BJ (cell line): ENCODE measurements at regions of chr2 and their contacts with region 1.

Region 1: GRCh38 chr2:73176881-73177644 is 25.3 kb upstream of the NOTO start:
- DNase-seq: no peak
- H3K4me3 ChIP-seq: peak overlapping the region; percentile 78
- H3K27me3 ChIP-seq: peaks cover 12% of the 10 kb centered on the region
- CTCF ChIP-seq: peak; percentile 99

Region 2: GRCh38 chr2:72895759-72896281 is 281.2 kb before region 1 on chr2:
- CTCF ChIA-PET with region 1: interaction called, 144 read pairs
- POLR2A ChIA-PET with region 1: no interaction called
- DNase-seq: no peak
- H3K4me3 ChIP-seq: no peak overlapping the region
- H3K27me3 ChIP-seq: peaks cover 18% of the 10 kb centered on the region
- CTCF ChIP-seq: no peak; the same call in 1 of the 2 replicates

Region 3: GRCh38 chr2:72973566-72974435 is 203.3 kb before region 1 on chr2:
- CTCF ChIA-PET with region 1: interaction called, 19 read pairs
- POLR2A ChIA-PET with region 1: no interaction called
- DNase-seq: no peak
- H3K4me3 ChIP-seq: no peak overlapping the region
- H3K27me3 ChIP-seq: no peaks in the 10 kb centered on the region
- CTCF ChIP-seq: peak; percentile 93

Region 4: GRCh38 chr2:72999729-73000725 is 177.0 kb before region 1 on chr2:
- CTCF ChIA-PET with region 1: interaction called, 17 read pairs
- POLR2A ChIA-PET with region 1: no interaction called
- DNase-seq: no peak
- H3K4me3 ChIP-seq: no peak overlapping the region
- H3K27me3 ChIP-seq: no peaks in the 10 kb centered on the region
- CTCF ChIP-seq: no peak

Region 5: GRCh38 chr2:73035899-73036711 is 141.0 kb before region 1 on chr2:
- CTCF ChIA-PET with region 1: no interaction called
- POLR2A ChIA-PET with region 1: no interaction called
- DNase-seq: no peak
- H3K4me3 ChIP-seq: no peak overlapping the region
- H3K27me3 ChIP-seq: no peaks in the 10 kb centered on the region
- CTCF ChIP-seq: 0 out of 2 replicates have a peak, but pooled peaks have one; percentile 7

Region 6: DNA sequence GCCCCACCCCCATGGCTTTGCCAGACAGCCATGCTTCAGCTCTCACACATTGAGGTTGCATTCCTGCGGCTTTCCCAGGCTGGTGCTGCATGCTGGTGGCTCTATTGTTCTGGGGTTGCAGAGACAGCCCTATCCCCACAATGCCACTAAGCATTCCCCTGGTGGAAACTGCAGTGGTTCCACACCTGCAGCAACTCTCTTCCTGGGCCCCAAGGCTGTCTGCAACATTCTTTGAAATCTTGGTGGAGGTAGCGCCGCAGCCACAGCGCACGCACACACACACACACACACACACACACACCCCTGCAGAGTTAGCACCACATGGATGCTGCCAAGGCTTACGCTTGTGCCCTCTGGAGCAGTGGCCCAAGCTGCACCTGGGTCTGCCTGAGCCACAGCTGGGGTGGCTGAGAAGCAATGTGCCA is 126.9 kb before region 1 on chr2:
- CTCF ChIA-PET with region 1: no interaction called
- POLR2A ChIA-PET with region 1: no interaction called
- DNase-seq: no peak
- H3K4me3 ChIP-seq: no peak overlapping the region
- H3K27me3 ChIP-seq: no peaks in the 10 kb centered on the region
- CTCF ChIP-seq: no peak

Region 7: DNA sequence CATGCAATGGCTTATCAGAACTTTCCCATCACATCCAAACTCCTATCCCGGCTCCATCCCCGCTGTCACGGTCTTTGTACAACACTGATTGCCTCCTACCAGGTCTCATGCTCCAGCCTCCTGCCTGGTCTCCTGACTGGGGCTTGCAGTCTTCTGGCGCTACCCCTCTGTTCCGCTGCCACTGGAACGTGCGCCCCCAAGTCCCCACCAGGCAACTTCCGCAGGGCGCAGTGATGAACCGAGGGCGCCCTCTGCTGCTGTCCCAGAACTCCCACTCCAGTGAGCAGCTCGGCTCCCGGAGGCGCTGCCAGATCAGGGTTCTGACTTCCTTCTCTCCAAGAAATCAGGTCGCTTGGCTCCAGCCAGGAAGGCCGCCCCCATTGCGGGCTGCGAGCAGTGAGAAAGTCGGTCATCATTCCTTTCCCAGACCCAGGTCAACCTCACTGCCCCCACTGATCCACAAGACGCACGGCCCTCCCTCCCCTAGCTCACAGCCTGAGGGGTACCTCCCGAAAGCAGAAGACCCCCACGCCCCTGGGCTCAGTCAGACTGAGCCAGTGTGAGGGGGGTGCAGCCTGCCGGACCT is 20.4 kb before region 1 on chr2:
- CTCF ChIA-PET with region 1: interaction called, 20 read pairs
- POLR2A ChIA-PET with region 1: no interaction called
- DNase-seq: no peak
- H3K4me3 ChIP-seq: no peak overlapping the region
- H3K27me3 ChIP-seq: peaks cover 6% of the 10 kb centered on the region
- CTCF ChIP-seq: peak; percentile 94

Region 8: DNA sequence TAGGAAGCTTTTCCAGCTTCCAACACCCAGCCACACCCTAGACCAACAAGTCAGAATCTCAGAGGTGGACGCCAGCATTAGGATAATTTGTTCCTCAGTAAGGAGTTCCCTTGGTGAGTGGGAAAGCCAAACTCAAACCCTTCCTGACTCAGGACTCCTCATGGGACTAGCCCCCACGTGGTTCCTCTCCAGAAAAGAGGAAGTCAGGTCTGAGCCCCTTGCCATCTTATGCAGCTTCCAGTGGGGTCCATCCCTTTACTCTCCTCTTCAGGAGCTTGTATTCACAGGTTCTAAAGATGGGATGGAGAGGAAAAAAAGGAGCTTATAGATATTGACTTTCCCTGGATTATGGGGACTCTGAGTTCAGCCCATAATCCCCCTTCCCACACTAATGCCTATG is 10.5 kb after region 1 on chr2:
- CTCF ChIA-PET with region 1: interaction called, 35 read pairs
- POLR2A ChIA-PET with region 1: no interaction called
- DNase-seq: no peak
- H3K4me3 ChIP-seq: no peak overlapping the region
- H3K27me3 ChIP-seq: peaks cover 32% of the 10 kb centered on the region
- CTCF ChIP-seq: no peak